Calu3 (cell line): ENCODE measurements at regions of chr1 and their contacts with region 1.

Region 1: GRCh38 chr1:56758135-56758534 is 61.1 kb downstream of the FYB2 start:
- DNase-seq: peak; percentile 57
- H3K4me3 Mint-ChIP-seq: no peak overlapping the region
- H3K27ac Mint-ChIP-seq: peak overlapping the region; percentile 69
- H3K4me1 Mint-ChIP-seq: peaks cover 28% of the 10 kb centered on the region
- H3K27me3 Mint-ChIP-seq: no peaks in the 10 kb centered on the region
- CTCF ChIP-seq: no peak

Region 2: DNA sequence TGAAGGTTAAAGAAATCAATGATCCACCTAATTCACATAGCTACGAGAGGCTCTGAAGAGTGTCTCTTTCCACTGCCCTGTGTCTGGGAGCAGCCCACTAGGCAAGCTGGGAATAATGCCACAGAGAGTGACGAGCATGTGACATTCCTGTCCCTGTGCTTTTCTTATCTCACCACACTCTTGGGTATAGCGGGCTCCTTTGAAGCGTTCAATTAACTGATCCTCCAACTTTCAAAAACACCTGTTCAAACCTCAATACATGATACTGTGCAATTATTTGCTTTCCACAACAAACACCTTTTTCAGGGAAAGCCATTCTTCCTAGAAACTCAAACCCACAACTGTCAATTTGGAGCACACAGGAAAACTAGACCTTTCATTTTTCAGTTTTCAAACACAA is 222.2 kb before region 1 on chr1:
- CTCF ChIA-PET with region 1: no interaction called
- intact Hi-C with region 1: no loop called
- DNase-seq: no peak
- H3K4me3 Mint-ChIP-seq: no peak overlapping the region
- H3K27ac Mint-ChIP-seq: no peak overlapping the region
- H3K4me1 Mint-ChIP-seq: no peaks in the 10 kb centered on the region
- H3K27me3 Mint-ChIP-seq: no peaks in the 10 kb centered on the region
- CTCF ChIP-seq: no peak

Region 3: GRCh38 chr1:56788588-56788987 is 30.5 kb after region 1 on chr1:
- CTCF ChIA-PET with region 1: no interaction called
- intact Hi-C with region 1: no loop called
- DNase-seq: peak; percentile 31
- H3K4me3 Mint-ChIP-seq: no peak overlapping the region
- H3K27ac Mint-ChIP-seq: no peak overlapping the region
- H3K4me1 Mint-ChIP-seq: no peaks in the 10 kb centered on the region
- H3K27me3 Mint-ChIP-seq: no peaks in the 10 kb centered on the region
- CTCF ChIP-seq: no peak

Region 4: GRCh38 chr1:56803561-56804156 is 45.5 kb after region 1 on chr1:
- CTCF ChIA-PET with region 1: interaction called, 11 read pairs
- intact Hi-C with region 1: loop called (anchors 1 kb)
- DNase-seq: peak; percentile 74
- H3K4me3 Mint-ChIP-seq: no peak overlapping the region
- H3K27ac Mint-ChIP-seq: no peak overlapping the region
- H3K4me1 Mint-ChIP-seq: no peaks in the 10 kb centered on the region
- H3K27me3 Mint-ChIP-seq: peaks cover under 1% of the 10 kb centered on the region
- CTCF ChIP-seq: peak; percentile 62

Region 5: DNA sequence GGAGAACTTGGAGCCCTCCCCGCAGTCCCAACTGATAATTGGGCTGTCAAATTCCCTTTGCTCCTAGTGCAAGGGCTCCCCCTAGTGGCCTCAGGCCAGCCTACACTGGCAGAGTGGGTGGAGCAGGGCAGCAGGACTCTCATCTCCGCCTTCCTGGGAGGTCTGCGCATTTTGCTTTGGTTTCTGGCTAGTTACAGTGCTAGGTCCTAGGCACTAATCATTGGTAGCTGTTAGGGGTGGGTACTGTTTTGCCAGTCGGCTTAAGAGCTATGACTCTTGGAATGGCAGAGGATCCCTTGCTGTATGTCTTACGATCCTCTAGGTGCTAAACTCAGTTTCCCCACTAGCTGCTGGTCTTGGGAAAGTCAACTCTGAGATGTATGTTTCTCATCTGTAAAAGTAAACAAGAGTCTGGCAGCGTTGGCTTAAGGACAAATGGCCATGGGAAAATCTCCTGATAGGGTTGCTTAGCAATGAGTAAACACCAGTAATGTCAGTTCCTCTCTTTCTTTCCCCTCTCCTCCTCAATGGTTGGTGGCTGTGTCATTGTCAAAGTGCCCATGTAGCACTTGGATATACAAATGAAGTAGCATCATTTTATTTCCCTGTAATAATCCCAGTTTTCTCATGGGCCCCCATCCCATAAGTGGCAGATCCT is 63.1 kb after region 1 on chr1:
- CTCF ChIA-PET with region 1: interaction called, 7 read pairs
- intact Hi-C with region 1: loop called (anchors 1 kb)
- DNase-seq: peak; percentile 88
- H3K4me3 Mint-ChIP-seq: no peak overlapping the region
- H3K27ac Mint-ChIP-seq: no peak overlapping the region
- H3K4me1 Mint-ChIP-seq: no peaks in the 10 kb centered on the region
- H3K27me3 Mint-ChIP-seq: peaks cover 38% of the 10 kb centered on the region
- CTCF ChIP-seq: peak; percentile 90